PC-3 (cell line): ENCODE measurements at regions of chr10 and their contacts with region 1.

Region 1: DNA sequence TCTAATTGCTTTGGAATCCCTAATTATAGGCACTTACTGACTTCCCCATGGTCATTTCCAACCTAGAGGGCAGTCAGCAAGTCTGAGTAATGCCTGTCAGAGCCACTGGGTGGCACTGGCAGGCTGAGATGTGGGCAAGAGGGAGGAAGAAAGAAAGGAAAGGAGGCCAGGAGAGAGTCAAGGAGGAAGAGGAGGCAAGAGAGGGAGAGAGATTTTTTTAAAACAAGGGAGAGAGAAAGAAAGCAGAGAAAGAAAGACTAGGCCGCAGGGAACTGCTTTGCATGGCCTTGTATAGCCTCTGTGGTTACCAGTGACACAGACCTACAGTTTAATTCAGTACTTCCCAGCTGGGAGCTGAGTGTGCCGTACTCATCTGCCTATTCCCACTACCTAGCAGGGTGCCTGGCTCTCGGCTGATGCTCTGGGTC is 210.4 kb upstream of the ADO start:
- DNase-seq: peak; percentile 98
- ATAC-seq: peak; percentile 86
- H3K4me3 ChIP-seq: no peak overlapping the region
- H3K27ac ChIP-seq: no peak overlapping the region
- H3K4me1 ChIP-seq: peaks cover 11% of the 10 kb centered on the region
- H3K27me3 ChIP-seq: no peaks in the 10 kb centered on the region
- CTCF ChIP-seq: peak; percentile 100

Region 2: DNA sequence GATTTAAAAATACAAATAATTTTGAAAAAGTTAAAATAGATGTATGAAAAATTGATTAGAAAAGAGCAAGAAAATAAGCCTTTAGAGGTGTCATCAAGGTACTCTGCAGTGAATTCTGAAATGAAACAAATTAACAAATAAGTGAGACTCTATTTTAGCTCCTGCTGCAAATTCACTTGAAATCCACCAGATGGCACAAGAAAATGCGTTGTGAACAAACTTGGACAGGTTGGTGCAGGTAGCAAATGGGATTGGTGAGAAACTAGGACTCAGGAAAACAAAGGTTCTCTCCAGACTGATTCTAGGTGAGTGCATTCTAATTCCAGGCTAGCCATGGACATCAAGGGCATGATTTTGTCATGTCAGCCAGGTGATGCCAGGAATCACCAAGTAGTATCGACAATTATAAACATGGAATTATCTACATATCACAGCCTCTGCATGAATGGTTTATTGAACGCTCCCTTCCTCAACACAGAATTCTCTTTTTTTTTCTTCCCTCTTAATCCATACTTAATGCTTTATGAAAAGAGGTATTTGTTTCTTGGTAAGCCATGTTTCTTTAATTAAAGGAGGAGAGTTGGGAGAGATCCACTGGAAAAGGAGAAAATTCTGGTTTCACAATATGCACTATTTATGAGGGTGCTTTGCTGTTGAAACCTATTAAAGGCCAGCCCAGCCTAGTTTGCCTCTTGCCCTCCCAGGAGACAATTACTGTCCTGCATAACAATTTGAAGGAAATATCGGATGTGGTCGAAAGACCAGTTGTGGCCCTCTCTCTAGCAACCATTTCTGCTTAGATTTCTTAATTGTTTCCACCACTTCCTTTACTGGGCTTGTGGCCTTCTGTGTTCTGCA is 101.9 kb before region 1 on chr10:
- CTCF ChIA-PET with region 1: interaction called, 14 read pairs
- POLR2A ChIA-PET with region 1: no interaction called
- intact Hi-C with region 1: loop called (anchors 1 kb)
- DNase-seq: peak; percentile 92
- ATAC-seq: peak; percentile 90
- H3K4me3 ChIP-seq: no peak overlapping the region
- H3K27ac ChIP-seq: no peak overlapping the region
- H3K4me1 ChIP-seq: no peaks in the 10 kb centered on the region
- H3K27me3 ChIP-seq: peaks cover 7% of the 10 kb centered on the region; the same call in 1 of the 2 replicates
- CTCF ChIP-seq: peak; percentile 100

Region 3: GRCh38 chr10:62582804-62583208 is 11.3 kb before region 1 on chr10:
- CTCF ChIA-PET with region 1: no interaction called
- POLR2A ChIA-PET with region 1: no interaction called
- intact Hi-C with region 1: no loop called
- DNase-seq: peak; percentile 86
- ATAC-seq: peak; percentile 77
- H3K4me3 ChIP-seq: no peak overlapping the region
- H3K27ac ChIP-seq: peak overlapping the region; percentile 1; the same call in 1 of the 2 replicates
- H3K4me1 ChIP-seq: peaks cover 11% of the 10 kb centered on the region
- H3K27me3 ChIP-seq: no peaks in the 10 kb centered on the region
- CTCF ChIP-seq: no peak